Activated B cell treated with CpG ODN at 0.5 μM for 24 hours (primary cell): ENCODE measurements at regions of chr11 and their contacts with region 1.

Region 1: DNA sequence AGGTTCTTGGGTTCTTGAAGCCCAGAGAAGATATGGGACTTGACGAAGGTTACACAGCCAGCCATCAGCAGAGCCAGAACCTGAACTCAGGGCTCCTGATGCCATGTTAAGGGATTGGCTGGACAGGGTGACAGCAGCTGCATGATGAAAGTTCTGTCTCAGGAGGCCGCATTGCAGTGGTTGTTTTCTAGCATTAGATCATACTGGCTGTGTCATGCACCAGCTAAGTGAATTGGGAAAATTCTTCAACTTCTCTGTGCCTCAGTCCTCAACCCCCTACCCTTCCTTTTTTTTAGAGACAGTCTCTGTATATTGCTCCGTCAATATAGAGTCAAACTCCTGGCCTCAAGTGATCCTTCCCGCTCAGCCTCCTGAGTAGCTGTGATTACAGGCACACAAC is 5.4 kb upstream of the LTBP3 start:
- DNase-seq: no peak
- ATAC-seq: no peak
- H3K4me3 Mint-ChIP-seq: no peak overlapping the region
- H3K27ac Mint-ChIP-seq: peak overlapping the region; percentile 35
- H3K4me1 Mint-ChIP-seq: peaks cover 38% of the 10 kb centered on the region
- H3K27me3 Mint-ChIP-seq: peaks cover 4% of the 10 kb centered on the region
- CTCF ChIP-seq: no peak

Region 2: DNA sequence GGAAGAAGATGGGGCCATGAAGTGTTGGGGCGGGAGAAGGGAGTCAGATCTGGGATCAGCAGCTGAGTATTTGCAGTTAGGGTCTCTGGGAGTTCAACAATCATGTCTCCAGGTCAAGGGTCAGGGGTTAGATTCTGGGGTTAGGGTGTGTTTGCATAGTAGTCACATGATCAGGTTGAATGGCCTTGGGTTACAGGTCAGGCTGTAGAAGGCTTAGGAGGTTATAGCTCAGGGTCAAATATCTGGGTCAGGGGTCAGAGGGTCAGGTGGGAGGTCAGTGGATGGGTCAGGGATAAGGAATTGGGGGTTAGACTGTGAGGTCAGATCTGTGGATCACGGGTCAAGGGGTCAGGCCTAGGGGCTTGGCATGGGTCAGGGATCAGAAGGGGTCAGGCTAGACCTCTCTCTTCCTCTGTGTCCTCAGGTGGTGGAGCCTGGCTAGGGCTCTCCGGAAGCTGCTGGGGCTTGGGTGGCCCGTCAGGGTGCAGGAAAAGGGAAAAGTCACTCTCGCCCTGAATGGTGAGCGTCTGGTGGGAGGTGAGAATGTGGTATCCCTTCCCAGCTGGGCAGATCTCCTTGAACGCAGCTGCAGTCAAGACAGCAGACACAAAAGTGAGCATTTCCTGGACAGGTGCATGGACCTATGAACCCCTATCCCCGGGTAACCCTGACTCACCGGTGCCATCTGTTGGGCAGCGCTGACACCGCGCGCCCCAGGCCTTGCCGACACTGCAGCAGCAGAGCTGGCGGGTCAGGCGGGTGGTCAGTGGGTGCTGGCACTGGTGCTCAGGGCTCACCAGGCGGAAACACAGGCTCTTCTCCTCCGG is 11.8 kb before region 1 on chr11:
- CTCF ChIA-PET with region 1: interaction called, 12 read pairs
- POLR2A ChIA-PET with region 1: interaction called, 10 read pairs
- intact Hi-C with region 1: loop called (anchors 1 kb)
- DNase-seq: peak; percentile 69
- ATAC-seq: peak; percentile 83
- H3K4me3 Mint-ChIP-seq: peak overlapping the region; percentile 24
- H3K27ac Mint-ChIP-seq: peak overlapping the region; percentile 59
- H3K4me1 Mint-ChIP-seq: peaks cover 64% of the 10 kb centered on the region
- H3K27me3 Mint-ChIP-seq: no peaks in the 10 kb centered on the region
- CTCF ChIP-seq: no peak